ENCODE measurements at regions of chr1 and their contacts with region 1.

Region 1: GRCh38 chr1:116006486-116006964 is 30.2 kb downstream of the SLC22A15 start:
- DNase-seq: no peak
- H3K4me3 ChIP-seq: no peak overlapping the region
- H3K27ac ChIP-seq: no peak overlapping the region
- H3K4me1 ChIP-seq: no peaks in the 10 kb centered on the region
- H3K27me3 ChIP-seq: no peaks in the 10 kb centered on the region
- CTCF ChIP-seq: no peak
- EP300 ChIP-seq: no peak
- POLR2A ChIP-seq: no peak

Region 2: DNA sequence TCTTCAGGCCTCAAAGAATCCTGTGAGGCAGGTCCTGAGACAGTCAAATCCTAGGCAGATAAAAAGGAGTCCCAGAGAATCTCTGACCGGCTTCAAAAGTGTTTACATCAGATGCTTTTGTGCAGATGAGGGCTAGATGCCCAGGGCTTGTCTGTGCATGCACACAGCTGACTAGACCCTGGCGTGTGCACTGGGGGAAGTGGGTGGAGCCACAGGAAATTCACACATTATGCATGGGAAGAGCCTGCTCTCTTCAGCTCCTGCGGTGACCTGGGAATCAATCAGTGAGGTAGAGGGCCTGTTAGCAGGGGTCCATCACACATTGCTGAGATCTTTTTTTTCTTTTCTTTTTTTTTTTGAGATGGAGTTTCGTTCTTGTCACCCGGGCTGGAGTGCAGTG is 129.0 kb before region 1 on chr1:
- intact Hi-C with region 1: no loop called
- DNase-seq: no peak
- H3K4me3 ChIP-seq: no peak overlapping the region
- H3K27ac ChIP-seq: no peak overlapping the region
- H3K4me1 ChIP-seq: no peaks in the 10 kb centered on the region
- H3K27me3 ChIP-seq: no peaks in the 10 kb centered on the region
- CTCF ChIP-seq: no peak
- EP300 ChIP-seq: no peak
- POLR2A ChIP-seq: no peak

Region 3: GRCh38 chr1:116067566-116067890 is 61.0 kb after region 1 on chr1:
- intact Hi-C with region 1: loop called in 1 of 4 experiments (anchors 2 kb)
- DNase-seq: no peak
- H3K4me3 ChIP-seq: no peak overlapping the region
- H3K27ac ChIP-seq: no peak overlapping the region
- H3K4me1 ChIP-seq: no peaks in the 10 kb centered on the region
- H3K27me3 ChIP-seq: no peaks in the 10 kb centered on the region
- CTCF ChIP-seq: no peak
- EP300 ChIP-seq: no peak
- POLR2A ChIP-seq: no peak

Region 4: DNA sequence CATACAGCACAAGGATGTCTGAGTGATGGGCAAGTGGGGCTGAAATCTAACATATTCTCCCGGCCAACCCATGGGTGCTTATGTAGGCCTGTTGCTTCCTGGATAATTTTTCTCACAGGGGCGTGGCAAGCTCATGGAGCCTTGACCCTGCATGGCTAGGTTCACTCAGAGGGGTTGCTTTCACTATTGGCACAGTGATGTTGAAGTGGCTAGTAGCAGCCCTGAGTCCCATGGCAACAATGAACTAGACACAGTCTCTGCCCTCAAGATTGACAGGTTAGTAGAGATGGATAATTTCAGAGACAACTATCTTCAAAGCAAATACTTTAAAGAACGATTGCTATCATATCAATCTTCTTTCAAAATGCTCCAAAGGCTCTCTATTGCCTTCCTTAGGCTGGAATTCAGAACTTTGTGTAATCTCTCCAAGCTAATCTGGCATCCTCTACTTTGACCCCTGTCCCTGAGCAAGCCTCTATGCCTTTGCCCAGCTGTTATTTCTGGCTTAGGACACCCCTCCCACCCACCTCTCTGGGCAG is 98.2 kb after region 1 on chr1:
- intact Hi-C with region 1: no loop called
- DNase-seq: no peak
- H3K4me3 ChIP-seq: no peak overlapping the region
- H3K27ac ChIP-seq: no peak overlapping the region
- H3K4me1 ChIP-seq: no peaks in the 10 kb centered on the region
- H3K27me3 ChIP-seq: no peaks in the 10 kb centered on the region
- CTCF ChIP-seq: no peak
- EP300 ChIP-seq: no peak
- POLR2A ChIP-seq: no peak

Region 5: GRCh38 chr1:116202934-116203723 is 196.6 kb after region 1 on chr1:
- intact Hi-C with region 1: no loop called
- DNase-seq: no peak
- H3K4me3 ChIP-seq: no peak overlapping the region
- H3K27ac ChIP-seq: no peak overlapping the region
- H3K4me1 ChIP-seq: no peaks in the 10 kb centered on the region
- H3K27me3 ChIP-seq: no peaks in the 10 kb centered on the region
- CTCF ChIP-seq: no peak
- EP300 ChIP-seq: no peak
- POLR2A ChIP-seq: no peak